Activated B cell treated with CpG ODN at 0.5 μM for 24 hours (primary cell): ENCODE measurements at regions of chr9 and their contacts with region 1.

Region 1: DNA sequence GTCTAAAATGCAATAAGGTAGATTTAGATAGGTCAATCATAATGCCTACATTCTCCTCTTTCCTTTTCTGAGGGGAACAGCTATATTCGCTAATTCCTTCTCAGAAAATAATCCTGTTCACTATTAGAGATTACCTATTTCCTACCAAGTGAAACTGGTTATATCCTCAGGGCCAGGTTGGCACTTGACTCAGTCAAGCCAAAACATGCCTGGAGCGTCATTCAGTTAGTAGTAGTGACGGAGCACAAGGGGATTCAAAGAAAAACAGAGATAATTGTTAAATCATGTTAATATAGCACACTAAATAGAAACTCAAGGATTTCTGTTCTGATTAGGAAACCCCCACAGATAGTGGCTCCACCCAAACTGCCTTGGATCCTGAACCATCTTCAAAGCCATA is 515.4 kb upstream of the PTPRD start:
- DNase-seq: no peak
- ATAC-seq: no peak
- H3K4me3 Mint-ChIP-seq: no peak overlapping the region
- H3K27ac Mint-ChIP-seq: no peak overlapping the region
- H3K4me1 Mint-ChIP-seq: no peaks in the 10 kb centered on the region
- H3K27me3 Mint-ChIP-seq: no peaks in the 10 kb centered on the region
- CTCF ChIP-seq: no peak

Region 2: GRCh38 chr9:10999646-11000045 is 128.5 kb before region 1 on chr9:
- CTCF ChIA-PET with region 1: no interaction called
- POLR2A ChIA-PET with region 1: no interaction called
- intact Hi-C with region 1: no loop called
- DNase-seq: no peak
- ATAC-seq: no peak
- H3K4me3 Mint-ChIP-seq: no peak overlapping the region
- H3K27ac Mint-ChIP-seq: no peak overlapping the region
- H3K4me1 Mint-ChIP-seq: no peaks in the 10 kb centered on the region
- H3K27me3 Mint-ChIP-seq: no peaks in the 10 kb centered on the region
- CTCF ChIP-seq: no peak

Region 3: GRCh38 chr9:11064897-11065296 is 63.3 kb before region 1 on chr9:
- CTCF ChIA-PET with region 1: no interaction called
- POLR2A ChIA-PET with region 1: no interaction called
- intact Hi-C with region 1: loop called (anchors 10 kb)
- DNase-seq: no peak
- ATAC-seq: no peak
- H3K4me3 Mint-ChIP-seq: no peak overlapping the region
- H3K27ac Mint-ChIP-seq: no peak overlapping the region
- H3K4me1 Mint-ChIP-seq: no peaks in the 10 kb centered on the region
- H3K27me3 Mint-ChIP-seq: no peaks in the 10 kb centered on the region
- CTCF ChIP-seq: no peak